H1 (cell line): ENCODE measurements at regions of chr19 and their contacts with region 1.

Region 1: GRCh38 chr19:11293433-11294389 is 2.2 kb upstream of the TSPAN16 start:
- DNase-seq: peak; percentile 88 to 100
- H3K4me3 ChIP-seq: peak overlapping the region in 2 of 4 experiments; percentile 21 to 44; a peak in 4 of 8 replicates
- H3K27ac ChIP-seq: no peak overlapping the region
- H3K4me1 ChIP-seq: peaks cover 2 to 6% (median 2%) of the 10 kb centered on the region in 4 experiments; a peak in 5 of 7 replicates
- H3K27me3 ChIP-seq: no peaks in the 10 kb centered on the region; a peak in 2 of 7 replicates
- CTCF ChIP-seq: peak; percentile 92 to 97 (median 93)
- EP300 ChIP-seq: no peak
- POLR2A ChIP-seq: no peak
- RAD21 ChIP-seq: peak; percentile 92 to 94

Region 2: GRCh38 chr19:11191273-11191755 is 102.4 kb before region 1 on chr19:
- CTCF ChIA-PET with region 1: no interaction called
- POLR2A ChIA-PET with region 1: no interaction called
- DNase-seq: peak in 1 of 2 experiments; percentile 59
- H3K4me3 ChIP-seq: no peak overlapping the region
- H3K27ac ChIP-seq: no peak overlapping the region
- H3K4me1 ChIP-seq: peaks cover 0 to 1% (median 0%) of the 10 kb centered on the region in 4 experiments; a peak in 2 of 7 replicates
- H3K27me3 ChIP-seq: no peaks in the 10 kb centered on the region
- CTCF ChIP-seq: no peak
- EP300 ChIP-seq: no peak
- POLR2A ChIP-seq: no peak
- RAD21 ChIP-seq: no peak

Region 3: GRCh38 chr19:11321191-11322126 is 27.7 kb after region 1 on chr19:
- CTCF ChIA-PET with region 1: interaction called, 12 read pairs
- POLR2A ChIA-PET with region 1: interaction called, 3 read pairs
- DNase-seq: no peak
- H3K4me3 ChIP-seq: no peak overlapping the region
- H3K27ac ChIP-seq: no peak overlapping the region
- H3K4me1 ChIP-seq: peaks cover 0 to 5% (median 0%) of the 10 kb centered on the region in 4 experiments; a peak in 3 of 7 replicates
- H3K27me3 ChIP-seq: no peaks in the 10 kb centered on the region
- CTCF ChIP-seq: peak; percentile 40 to 62 (median 42)
- EP300 ChIP-seq: no peak
- POLR2A ChIP-seq: no peak
- RAD21 ChIP-seq: peak in 1 of 2 experiments; percentile 37; a peak in 1 of 4 replicates

Region 4: GRCh38 chr19:11361037-11361770 is 67.5 kb after region 1 on chr19:
- CTCF ChIA-PET with region 1: interaction called, 13 read pairs
- POLR2A ChIA-PET with region 1: no interaction called
- DNase-seq: peak in 1 of 2 experiments; percentile 100
- H3K4me3 ChIP-seq: peak overlapping the region; percentile 46 to 62 (median 56)
- H3K27ac ChIP-seq: 0 out of 2 replicates have a peak overlapping the region, but pooled peaks have one; percentile 19
- H3K4me1 ChIP-seq: peaks cover 0 to 9% (median 5%) of the 10 kb centered on the region in 4 experiments
- H3K27me3 ChIP-seq: peaks cover 0 to 11% (median 5%) of the 10 kb centered on the region in 4 experiments; a peak in 3 of 7 replicates
- CTCF ChIP-seq: peak; percentile 19 to 44 (median 44); a peak in 3 of 4 replicates
- EP300 ChIP-seq: no peak
- POLR2A ChIP-seq: peak in 1 of 2 experiments; percentile 46; a peak in 1 of 3 replicates
- RAD21 ChIP-seq: no peak